ENCODE measurements at regions of chr22 and their contacts with region 1.

Region 1: GRCh38 chr22:37538590-37539357 is 19.6 kb upstream of the CARD10 start:
- DNase-seq: peak; percentile 70 to 96
- H3K4me3 ChIP-seq: peak overlapping the region in 1 of 2 donors; percentile 7
- H3K27ac ChIP-seq: no peak overlapping the region
- H3K4me1 ChIP-seq: peaks cover 0 to 6% of the 10 kb centered on the region in 2 donors
- H3K27me3 ChIP-seq: no peaks in the 10 kb centered on the region
- CTCF ChIP-seq: peak; percentile 95 to 99 (median 96)

Region 2: GRCh38 chr22:37032546-37033460 is 506.0 kb before region 1 on chr22:
- intact Hi-C with region 1: no loop called
- DNase-seq: no peak
- H3K4me3 ChIP-seq: no peak overlapping the region
- H3K27ac ChIP-seq: no peak overlapping the region
- H3K4me1 ChIP-seq: no peaks in the 10 kb centered on the region
- H3K27me3 ChIP-seq: no peaks in the 10 kb centered on the region
- CTCF ChIP-seq: no peak

Region 3: GRCh38 chr22:37566903-37567820 is 28.4 kb after region 1 on chr22:
- intact Hi-C with region 1: loop called (anchors 1 kb)
- DNase-seq: peak in 1 of 2 donors; percentile 91
- H3K4me3 ChIP-seq: peak overlapping the region in 1 of 2 donors; percentile 30
- H3K27ac ChIP-seq: peak overlapping the region; percentile 98 to 99
- H3K4me1 ChIP-seq: peaks cover 39 to 59% of the 10 kb centered on the region in 2 donors
- H3K27me3 ChIP-seq: no peaks in the 10 kb centered on the region
- CTCF ChIP-seq: peak; percentile 89 to 94 (median 94)

Region 4: DNA sequence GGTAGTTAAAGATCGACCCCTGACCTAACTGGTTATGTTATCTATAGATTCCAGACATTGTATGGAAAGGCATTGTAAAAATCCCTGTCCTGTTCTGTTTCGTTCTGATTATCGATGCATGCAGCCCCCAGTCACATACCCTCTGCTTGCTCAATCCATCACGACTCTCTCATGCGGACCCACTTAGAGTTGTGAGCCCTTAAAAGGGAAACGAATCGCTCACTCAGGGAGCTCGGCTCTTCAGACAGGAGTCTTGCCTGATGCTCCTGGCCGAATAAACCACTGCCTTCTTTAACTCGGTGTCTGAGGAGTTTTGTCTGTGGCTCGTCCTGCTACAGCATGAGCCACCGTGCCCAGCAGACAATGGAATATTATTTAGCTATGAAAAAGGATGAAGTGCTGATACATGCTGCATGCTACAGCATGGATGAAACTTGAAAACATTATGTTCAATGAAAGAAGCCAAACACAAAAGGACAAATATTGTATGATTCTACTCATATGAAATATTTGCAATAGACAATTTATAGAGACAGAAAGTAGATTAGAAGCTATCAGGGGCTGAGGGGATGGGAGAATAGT is 53.1 kb after region 1 on chr22:
- intact Hi-C with region 1: loop called (anchors 1 kb)
- DNase-seq: no peak
- H3K4me3 ChIP-seq: no peak overlapping the region
- H3K27ac ChIP-seq: no peak overlapping the region
- H3K4me1 ChIP-seq: no peaks in the 10 kb centered on the region
- H3K27me3 ChIP-seq: no peaks in the 10 kb centered on the region
- CTCF ChIP-seq: no peak